ENCODE measurements at regions of chr6 and their contacts with region 1.

Region 1: DNA sequence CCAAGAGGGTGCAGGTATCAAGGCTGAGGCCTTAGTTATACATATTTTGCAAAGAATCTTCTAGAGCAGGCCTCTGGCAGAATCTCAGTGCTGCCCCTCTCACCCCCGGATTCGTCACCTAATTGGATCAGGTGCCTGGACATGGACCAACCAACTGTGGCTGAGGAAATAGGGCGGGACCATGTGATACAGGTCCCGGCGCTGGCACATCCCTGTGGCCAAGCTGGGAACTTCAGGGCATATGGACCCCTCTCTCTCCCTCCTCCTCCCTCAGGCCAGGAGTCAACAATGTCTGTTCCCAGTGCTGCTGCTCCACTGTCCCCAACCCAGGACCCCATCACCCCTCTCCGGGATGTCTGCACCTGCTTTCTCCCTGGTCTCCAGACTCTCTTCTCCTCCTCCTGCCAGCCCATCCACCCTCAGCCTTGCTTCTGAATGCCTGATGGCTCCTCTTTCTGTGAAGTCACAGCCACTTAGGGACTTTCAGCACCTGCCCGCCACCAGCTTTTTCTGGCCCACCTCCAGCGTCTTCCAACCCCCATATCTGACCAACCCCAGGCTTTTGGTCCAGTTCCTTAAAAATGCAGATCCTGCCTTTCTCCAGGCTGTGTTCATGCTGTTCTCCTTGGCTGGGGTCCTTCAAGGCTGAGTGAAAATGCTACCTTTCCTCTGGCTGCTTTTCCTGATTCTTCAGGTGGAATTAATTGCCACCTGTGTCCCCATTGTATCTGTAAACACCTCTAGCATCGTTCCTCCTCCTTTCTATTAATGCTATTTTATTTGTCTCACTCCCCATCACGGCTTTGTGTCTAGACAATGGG is 19.0 kb upstream of the MLN start:
- DNase-seq: peak; percentile 19
- H3K4me3 ChIP-seq: no peak overlapping the region
- H3K27ac ChIP-seq: no peak overlapping the region
- H3K4me1 ChIP-seq: peaks cover 6% of the 10 kb centered on the region
- H3K27me3 ChIP-seq: peaks cover 2 to 5% of the 10 kb centered on the region in 2 experiments
- CTCF ChIP-seq: peak in 1 of 2 donors; percentile 26
- POLR2A ChIP-seq: no peak

Region 2: GRCh38 chr6:33040157-33040556 is 782.6 kb before region 1 on chr6:
- CTCF ChIA-PET with region 1: no interaction called
- POLR2A ChIA-PET with region 1: no interaction called
- dilution Hi-C with region 1: no loop called
- intact Hi-C with region 1: no loop called
- DNase-seq: no peak
- H3K4me3 ChIP-seq: no peak overlapping the region
- H3K27ac ChIP-seq: no peak overlapping the region
- H3K4me1 ChIP-seq: no peaks in the 10 kb centered on the region
- H3K27me3 ChIP-seq: peaks cover 13 to 21% of the 10 kb centered on the region in 2 experiments
- CTCF ChIP-seq: no peak
- POLR2A ChIP-seq: no peak

Region 3: DNA sequence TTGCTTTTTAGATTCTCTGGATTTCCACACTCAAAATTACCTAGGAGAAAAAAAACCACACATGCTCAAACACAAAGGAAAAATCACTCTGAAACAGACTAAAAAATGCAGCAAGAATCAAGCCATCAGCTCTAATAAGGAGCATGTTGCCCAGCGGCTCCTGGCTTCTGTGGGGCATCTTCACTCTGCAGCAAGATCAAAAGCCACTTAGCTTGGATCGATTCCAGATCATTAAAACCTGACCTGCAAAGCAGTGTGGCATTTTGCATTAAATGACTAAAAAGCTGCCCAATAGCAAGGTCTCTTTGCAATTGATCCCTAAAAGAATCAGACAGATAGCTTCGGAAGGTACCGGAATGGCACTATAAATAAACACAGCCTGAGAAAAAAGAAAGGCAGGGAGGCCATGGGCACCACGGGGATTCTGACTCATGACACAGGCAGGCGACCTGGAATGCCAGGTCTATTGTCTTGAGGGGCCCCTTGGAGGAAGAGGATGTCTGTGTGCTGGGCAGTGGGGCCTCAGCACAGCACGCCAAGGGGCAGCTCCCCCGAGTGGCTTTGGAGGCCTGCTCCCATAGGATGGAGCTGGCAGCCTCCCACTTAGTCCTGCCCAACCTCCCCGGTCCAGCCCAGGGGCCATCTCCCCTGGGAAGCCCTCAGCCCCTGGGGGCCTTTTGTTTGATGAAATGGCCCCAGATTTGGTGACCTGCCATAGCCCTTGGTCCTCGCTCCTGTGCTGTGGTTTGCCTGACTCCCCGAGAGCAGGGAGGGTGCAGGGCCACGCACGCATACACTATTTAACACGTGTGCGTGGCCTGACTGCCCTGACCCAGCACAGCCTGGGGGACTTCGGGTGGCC is 41.4 kb before region 1 on chr6:
- CTCF ChIA-PET with region 1: no interaction called
- POLR2A ChIA-PET with region 1: no interaction called
- dilution Hi-C with region 1: no loop called
- intact Hi-C with region 1: loop called (anchors 1 kb)
- DNase-seq: peak; percentile 92
- H3K4me3 ChIP-seq: peak overlapping the region in 1 of 3 experiments; percentile 13
- H3K27ac ChIP-seq: peak overlapping the region; percentile 96
- H3K4me1 ChIP-seq: peaks cover 56% of the 10 kb centered on the region
- H3K27me3 ChIP-seq: no peaks in the 10 kb centered on the region
- CTCF ChIP-seq: no peak
- POLR2A ChIP-seq: peak; percentile 71

Measured in endothelial cell of umbilical vein (primary cell).